T-cell (primary cell): ENCODE measurements at regions of chr2 and their contacts with region 1.

Region 1: GRCh38 chr2:159549234-159549633 is 67.1 kb downstream of the BAZ2B start:
- DNase-seq: no peak
- ATAC-seq: no peak
- H3K4me3 ChIP-seq: no peak overlapping the region
- H3K4me3 Mint-ChIP-seq: no peak overlapping the region
- H3K27ac ChIP-seq: no peak overlapping the region
- H3K27ac Mint-ChIP-seq: no peak overlapping the region
- H3K4me1 ChIP-seq: no peaks in the 10 kb centered on the region
- H3K4me1 Mint-ChIP-seq: peaks cover 0 to 5% (median 0%) of the 10 kb centered on the region in 3 donors
- H3K27me3 ChIP-seq: no peaks in the 10 kb centered on the region
- H3K27me3 Mint-ChIP-seq: no peaks in the 10 kb centered on the region

Region 2: DNA sequence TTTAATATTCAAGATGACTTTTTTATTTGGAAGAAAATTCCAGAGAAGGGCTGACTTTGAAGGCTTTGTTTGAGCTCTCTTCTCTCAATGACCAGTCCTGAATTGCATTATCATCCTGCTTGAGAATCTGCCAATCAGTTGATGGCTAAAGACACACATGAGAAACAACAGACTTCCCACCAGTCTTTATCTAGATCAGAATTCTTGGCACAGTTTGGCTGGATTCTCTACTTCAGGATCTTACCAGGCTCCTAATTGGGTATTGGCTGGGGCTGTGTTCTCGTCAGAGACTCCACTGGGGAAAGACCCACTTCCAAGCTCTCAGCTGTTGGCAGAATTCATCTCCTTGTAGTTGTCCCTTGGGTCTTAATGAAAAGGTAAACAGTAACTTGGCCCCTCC is 348.7 kb before region 1 on chr2:
- CTCF ChIA-PET with region 1: no interaction called
- POLR2A ChIA-PET with region 1: interaction called in 1 of 2 experiments, 21 read pairs
- DNase-seq: no peak
- ATAC-seq: no peak
- H3K4me3 ChIP-seq: no peak overlapping the region
- H3K4me3 Mint-ChIP-seq: no peak overlapping the region
- H3K27ac ChIP-seq: no peak overlapping the region
- H3K27ac Mint-ChIP-seq: no peak overlapping the region
- H3K4me1 ChIP-seq: peaks cover 0 to 14% of the 10 kb centered on the region in 2 experiments
- H3K4me1 Mint-ChIP-seq: peaks cover 16 to 26% (median 25%) of the 10 kb centered on the region in 3 donors
- H3K27me3 ChIP-seq: no peaks in the 10 kb centered on the region
- H3K27me3 Mint-ChIP-seq: no peaks in the 10 kb centered on the region

Region 3: GRCh38 chr2:159249984-159250715 is 299.1 kb before region 1 on chr2:
- CTCF ChIA-PET with region 1: no interaction called
- POLR2A ChIA-PET with region 1: interaction called in 1 of 2 experiments, 12 read pairs
- DNase-seq: no peak
- ATAC-seq: no peak
- H3K4me3 ChIP-seq: no peak overlapping the region
- H3K4me3 Mint-ChIP-seq: no peak overlapping the region
- H3K27ac ChIP-seq: no peak overlapping the region
- H3K27ac Mint-ChIP-seq: no peak overlapping the region
- H3K4me1 ChIP-seq: no peaks in the 10 kb centered on the region
- H3K4me1 Mint-ChIP-seq: peaks cover 0 to 3% (median 2%) of the 10 kb centered on the region in 3 donors
- H3K27me3 ChIP-seq: no peaks in the 10 kb centered on the region
- H3K27me3 Mint-ChIP-seq: no peaks in the 10 kb centered on the region

Region 4: DNA sequence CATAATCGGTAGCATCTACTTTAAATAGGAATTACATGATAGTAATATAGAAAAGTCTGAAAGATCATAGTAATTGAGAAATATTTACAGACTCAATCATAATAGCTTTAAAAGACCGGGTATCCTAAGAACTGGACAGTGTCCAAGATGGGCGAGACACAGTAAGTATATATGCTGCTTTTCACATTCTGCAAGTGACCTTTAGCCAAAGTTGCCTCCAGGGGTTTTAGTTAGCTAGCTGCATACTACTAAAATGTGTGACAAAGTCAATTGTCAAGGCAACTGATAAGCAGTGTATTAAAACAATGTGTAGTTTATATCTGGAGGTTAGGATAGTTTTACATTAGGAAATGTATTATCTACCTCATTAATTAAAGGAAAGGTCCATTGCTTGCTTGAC is 224.2 kb after region 1 on chr2:
- CTCF ChIA-PET with region 1: interaction called in 1 of 2 experiments, 10 read pairs
- POLR2A ChIA-PET with region 1: no interaction called
- DNase-seq: no peak
- ATAC-seq: no peak
- H3K4me3 ChIP-seq: no peak overlapping the region
- H3K4me3 Mint-ChIP-seq: no peak overlapping the region
- H3K27ac ChIP-seq: no peak overlapping the region
- H3K27ac Mint-ChIP-seq: no peak overlapping the region
- H3K4me1 ChIP-seq: no peaks in the 10 kb centered on the region
- H3K4me1 Mint-ChIP-seq: peaks cover 0 to 9% (median 0%) of the 10 kb centered on the region in 3 donors
- H3K27me3 ChIP-seq: no peaks in the 10 kb centered on the region
- H3K27me3 Mint-ChIP-seq: no peaks in the 10 kb centered on the region

Region 5: DNA sequence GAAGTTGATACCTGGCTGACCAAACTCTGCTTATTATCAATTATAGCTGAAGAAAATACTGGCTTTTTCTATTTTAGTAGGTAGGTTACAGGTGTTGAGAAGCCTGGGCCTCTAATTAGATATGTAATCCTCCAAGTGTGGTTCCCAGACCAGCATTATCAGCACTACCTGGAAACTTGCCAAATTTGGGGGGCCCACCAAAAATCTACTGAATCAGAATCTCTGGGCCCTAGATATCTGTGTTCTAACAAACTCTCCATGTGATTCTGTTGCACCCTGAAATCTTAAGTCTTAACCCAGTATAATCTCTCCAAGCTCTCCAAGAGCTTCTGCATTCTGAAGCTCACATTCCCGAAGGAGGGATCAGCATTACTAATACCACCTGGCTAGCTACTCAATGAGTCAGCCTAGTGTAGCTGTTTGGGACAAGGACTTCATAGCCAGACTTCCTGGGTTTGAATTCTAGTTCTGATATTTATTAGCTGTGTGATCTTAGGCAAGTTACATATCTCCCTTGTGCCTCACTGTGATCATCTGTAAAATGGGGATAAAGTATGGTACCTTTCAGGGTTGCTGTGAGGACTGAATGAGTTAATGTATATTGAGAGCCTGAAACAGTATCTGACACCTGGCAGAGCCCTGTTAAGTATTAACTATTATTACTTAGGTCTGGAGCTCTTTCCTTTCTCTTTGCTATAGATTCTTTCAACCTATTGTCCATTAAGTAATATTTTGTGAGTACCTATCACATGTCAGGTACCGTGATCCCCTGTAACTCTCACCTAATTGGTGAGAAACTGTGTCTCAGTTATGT is 342.9 kb after region 1 on chr2:
- CTCF ChIA-PET with region 1: no interaction called
- POLR2A ChIA-PET with region 1: no interaction called
- DNase-seq: no peak
- ATAC-seq: no peak
- H3K4me3 ChIP-seq: no peak overlapping the region
- H3K4me3 Mint-ChIP-seq: no peak overlapping the region
- H3K27ac ChIP-seq: no peak overlapping the region
- H3K27ac Mint-ChIP-seq: no peak overlapping the region
- H3K4me1 ChIP-seq: no peaks in the 10 kb centered on the region
- H3K4me1 Mint-ChIP-seq: peaks cover 30 to 50% (median 37%) of the 10 kb centered on the region in 3 donors
- H3K27me3 ChIP-seq: no peaks in the 10 kb centered on the region
- H3K27me3 Mint-ChIP-seq: no peaks in the 10 kb centered on the region